ENCODE measurements at regions of chr2 and their contacts with region 1.

Region 1: GRCh38 chr2:230268606-230269243 is 43.2 kb downstream of the SP140 start:
- DNase-seq: no peak
- H3K4me3 Mint-ChIP-seq: peak overlapping the region; percentile 37
- H3K27ac Mint-ChIP-seq: peak overlapping the region; percentile 90
- H3K4me1 Mint-ChIP-seq: peaks cover 75% of the 10 kb centered on the region
- H3K27me3 Mint-ChIP-seq: no peaks in the 10 kb centered on the region

Region 2: GRCh38 chr2:230225486-230225885 is 43.2 kb before region 1 on chr2 and contains the start of gene SP140:
- intact Hi-C with region 1: loop called (anchors 5 kb)
- DNase-seq: peak; percentile 81
- H3K4me3 Mint-ChIP-seq: peak within 1 kb of the TSS; percentile 89
- H3K27ac Mint-ChIP-seq: peak within 1 kb of the TSS; percentile 97
- H3K4me1 Mint-ChIP-seq: peaks cover 41% of the 10 kb centered on the region
- H3K27me3 Mint-ChIP-seq: no peaks in the 10 kb centered on the region
- total RNA-seq, gene SP140: 316 and 317 TPM in 2 replicates

Region 3: GRCh38 chr2:230286048-230286447 is 17.3 kb after region 1 on chr2:
- intact Hi-C with region 1: loop called (anchors 1 kb)
- DNase-seq: no peak
- H3K4me3 Mint-ChIP-seq: no peak overlapping the region
- H3K27ac Mint-ChIP-seq: peak overlapping the region; percentile 4
- H3K4me1 Mint-ChIP-seq: peaks cover 34% of the 10 kb centered on the region
- H3K27me3 Mint-ChIP-seq: no peaks in the 10 kb centered on the region

Region 4: GRCh38 chr2:230326453-230327417 is 58.0 kb after region 1 on chr2 and contains the start of gene SP140L:
- intact Hi-C with region 1: no loop called
- DNase-seq: peak; percentile 76
- H3K4me3 Mint-ChIP-seq: peak within 1 kb of the TSS; percentile 91
- H3K27ac Mint-ChIP-seq: peak within 1 kb of the TSS; percentile 92
- H3K4me1 Mint-ChIP-seq: peaks cover 67% of the 10 kb centered on the region
- H3K27me3 Mint-ChIP-seq: no peaks in the 10 kb centered on the region
- total RNA-seq, gene SP140L: 55.7 and 59.1 TPM in 2 replicates

Region 5: DNA sequence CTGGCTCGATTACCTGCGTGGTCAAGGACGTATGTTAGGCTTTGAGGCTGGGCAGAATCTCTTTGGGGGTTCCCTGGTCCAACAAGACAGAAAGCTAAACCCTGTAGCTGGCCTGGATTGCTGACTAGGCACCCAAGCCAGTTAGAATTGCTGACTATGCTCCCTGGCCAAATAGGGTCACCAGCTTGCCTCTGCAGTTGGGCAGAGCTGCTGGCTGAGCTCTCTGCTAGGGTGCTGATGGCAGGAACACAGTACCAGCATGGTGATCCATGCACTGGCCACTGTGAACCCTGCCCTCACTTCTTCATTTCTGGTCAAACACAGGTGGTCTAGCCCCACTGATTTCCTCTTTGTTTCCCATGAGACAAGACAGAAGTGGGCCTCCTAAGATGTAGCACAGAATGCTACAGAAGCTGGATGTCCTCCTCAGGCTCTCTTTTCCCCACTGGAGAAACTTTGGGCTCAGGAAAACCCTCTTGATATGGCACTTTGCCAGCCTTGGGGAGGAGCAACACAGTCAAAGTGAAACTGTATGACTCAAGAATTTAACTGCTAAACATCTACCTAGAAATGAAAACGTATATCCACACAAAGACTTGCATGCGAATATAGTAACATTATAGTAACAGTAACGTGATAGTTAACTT is 79.1 kb after region 1 on chr2:
- intact Hi-C with region 1: loop called (anchors 2 kb)
- DNase-seq: peak; percentile 45
- H3K4me3 Mint-ChIP-seq: peak overlapping the region; percentile 61
- H3K27ac Mint-ChIP-seq: peak overlapping the region; percentile 94
- H3K4me1 Mint-ChIP-seq: peaks cover 73% of the 10 kb centered on the region
- H3K27me3 Mint-ChIP-seq: no peaks in the 10 kb centered on the region

Region 6: GRCh38 chr2:230441227-230441897 is 172.6 kb after region 1 on chr2:
- intact Hi-C with region 1: loop called (anchors 2 kb)
- DNase-seq: peak; percentile 48
- H3K4me3 Mint-ChIP-seq: peak overlapping the region; percentile 46
- H3K27ac Mint-ChIP-seq: peak overlapping the region; percentile 85
- H3K4me1 Mint-ChIP-seq: peaks cover 50% of the 10 kb centered on the region
- H3K27me3 Mint-ChIP-seq: no peaks in the 10 kb centered on the region